Heart left ventricle (tissue), 16 donors: ENCODE measurements at regions of chr4 and their contacts with region 1.

Region 1: DNA sequence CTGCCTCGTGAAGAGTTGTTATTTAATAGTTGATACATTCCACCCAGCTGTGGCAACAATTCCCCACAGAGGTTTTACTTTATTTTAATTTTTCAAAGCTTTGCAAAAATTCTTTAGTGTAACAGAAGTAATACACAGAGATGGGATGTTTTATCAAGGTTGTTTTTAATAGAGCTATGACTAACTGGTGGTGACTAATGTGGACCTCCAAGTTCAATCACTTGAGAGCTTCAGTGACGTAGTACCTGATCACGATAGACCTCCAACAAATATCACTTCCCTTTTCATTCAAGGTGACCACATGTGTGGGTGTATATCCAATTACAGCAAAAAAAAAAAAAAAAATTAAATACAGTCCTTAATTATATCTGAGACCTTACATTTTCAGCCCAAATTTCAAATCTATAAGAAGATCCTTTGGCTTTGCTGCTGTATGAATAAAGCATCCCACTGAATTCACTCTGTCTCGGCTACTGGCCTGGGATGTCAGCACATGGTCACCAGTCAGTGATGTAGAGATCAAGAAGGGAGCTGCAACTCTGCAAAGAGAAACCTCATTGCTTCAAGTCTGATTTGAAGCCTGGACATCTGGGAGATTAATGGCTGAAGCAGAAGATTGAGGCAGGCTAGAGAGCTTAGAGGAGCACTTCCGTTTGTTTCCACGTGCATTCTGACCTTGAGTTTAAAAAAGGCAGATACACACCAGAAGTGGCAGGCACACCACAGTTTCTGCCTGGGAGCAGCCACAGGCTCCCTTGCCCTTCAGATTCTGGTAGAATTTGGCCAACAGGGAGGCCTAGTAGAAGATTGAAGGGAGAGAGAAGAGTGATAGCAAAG is 345.9 kb upstream of the NOCT start:
- DNase-seq: no peak
- ATAC-seq: no peak
- H3K4me3 ChIP-seq: no peak overlapping the region
- H3K27ac ChIP-seq: no peak overlapping the region
- H3K4me1 ChIP-seq: peaks cover 0 to 20% (median 2%) of the 10 kb centered on the region in 12 donors
- H3K27me3 ChIP-seq: no peaks in the 10 kb centered on the region
- CTCF ChIP-seq: no peak
- POLR2A ChIP-seq: no peak

Region 2: DNA sequence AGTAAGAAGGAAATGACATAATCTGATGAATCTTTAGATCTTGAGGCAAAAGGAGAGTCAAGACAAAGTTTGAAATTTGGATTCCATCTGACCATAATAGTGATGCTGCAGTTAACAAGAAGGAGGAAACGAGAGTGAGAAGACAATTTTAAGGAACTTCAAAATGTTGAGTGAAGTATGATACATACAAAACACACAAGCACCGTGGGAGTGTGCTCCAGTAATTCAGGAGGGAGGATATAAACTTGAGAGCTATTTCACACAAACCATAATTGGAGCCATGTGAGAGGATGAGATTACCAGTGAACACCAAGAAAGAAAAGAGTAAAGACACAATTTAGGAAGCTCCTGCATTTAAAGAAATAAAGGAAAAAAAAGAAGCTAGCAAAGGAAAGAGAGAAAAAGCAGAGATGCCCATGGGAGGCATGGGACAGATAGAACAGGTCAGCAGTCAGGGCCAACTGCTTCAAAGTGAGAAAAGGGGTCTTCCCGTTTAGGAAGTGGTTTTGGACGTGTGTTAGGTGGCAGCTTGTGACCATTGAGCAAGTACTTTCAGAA is 276.9 kb before region 1 on chr4:
- intact Hi-C with region 1: loop called in 1 of 10 experiments (anchors 10 kb)
- DNase-seq: no peak
- ATAC-seq: no peak
- H3K4me3 ChIP-seq: no peak overlapping the region
- H3K27ac ChIP-seq: no peak overlapping the region
- H3K4me1 ChIP-seq: peaks cover 0 to 5% (median 0%) of the 10 kb centered on the region in 12 donors
- H3K27me3 ChIP-seq: no peaks in the 10 kb centered on the region
- CTCF ChIP-seq: no peak
- POLR2A ChIP-seq: no peak

Region 3: DNA sequence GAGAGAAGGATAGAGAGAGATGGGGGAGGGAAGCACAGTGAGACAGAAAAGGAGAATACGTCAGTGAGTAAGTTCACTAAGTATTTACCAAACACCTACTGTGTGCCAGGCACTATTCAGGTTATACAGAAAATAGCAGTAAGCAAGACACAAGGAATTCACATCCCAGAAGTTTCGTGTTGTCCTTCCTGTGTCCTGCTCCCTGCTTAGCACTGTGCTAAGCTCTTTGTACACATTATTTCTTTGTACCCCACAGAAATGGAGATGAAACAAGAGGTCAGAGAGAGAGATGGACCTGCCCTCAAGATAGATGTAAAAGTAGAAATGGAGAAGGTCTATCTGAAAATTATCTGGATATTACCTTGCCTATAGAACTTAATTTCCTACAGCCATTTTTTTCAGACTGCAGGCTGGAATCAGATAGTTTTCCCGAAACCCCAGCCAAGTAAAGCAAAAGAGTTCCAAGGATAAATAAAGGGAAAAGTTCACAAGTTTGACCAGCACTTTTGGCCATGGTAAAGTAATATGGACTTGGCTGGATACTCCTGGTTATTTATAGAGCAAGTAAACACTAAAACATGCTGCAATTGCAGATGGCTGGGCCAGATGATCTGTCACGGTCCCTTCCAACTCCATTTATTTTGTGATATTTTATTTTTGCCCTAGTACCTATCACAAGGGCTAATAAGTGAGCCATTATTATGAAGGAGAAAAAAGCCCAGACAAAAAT is 73.8 kb before region 1 on chr4:
- intact Hi-C with region 1: loop called in 1 of 10 experiments (anchors 5 kb)
- DNase-seq: peak in 3 of 5 donors; percentile 25 to 29 (median 29)
- ATAC-seq: peak; percentile 60 to 82 (median 75)
- H3K4me3 ChIP-seq: no peak overlapping the region
- H3K27ac ChIP-seq: peak overlapping the region in 4 of 12 donors; percentile 11 to 39 (median 32)
- H3K4me1 ChIP-seq: peaks cover 0 to 34% (median 11%) of the 10 kb centered on the region in 12 donors
- H3K27me3 ChIP-seq: no peaks in the 10 kb centered on the region
- CTCF ChIP-seq: no peak
- POLR2A ChIP-seq: no peak